ENCODE measurements at regions of chr14 and their contacts with region 1.

Region 1: GRCh38 chr14:23068476-23069412 is 11.4 kb upstream of the CDH24 start:
- DNase-seq: peak; percentile 84
- ATAC-seq: peak; percentile 79
- H3K4me3 Mint-ChIP-seq: peak overlapping the region; percentile 5
- H3K27ac Mint-ChIP-seq: peak overlapping the region; percentile 80
- H3K4me1 Mint-ChIP-seq: peaks cover 37% of the 10 kb centered on the region
- H3K27me3 Mint-ChIP-seq: no peaks in the 10 kb centered on the region

Region 2: GRCh38 chr14:22095860-22096513 is 972.8 kb before region 1 on chr14:
- CTCF ChIA-PET with region 1: no interaction called
- POLR2A ChIA-PET with region 1: no interaction called
- intact Hi-C with region 1: no loop called
- DNase-seq: no peak
- ATAC-seq: peak; percentile 20
- H3K4me3 Mint-ChIP-seq: peak overlapping the region; percentile 65
- H3K27ac Mint-ChIP-seq: peak overlapping the region; percentile 87
- H3K4me1 Mint-ChIP-seq: peaks cover 45% of the 10 kb centered on the region
- H3K27me3 Mint-ChIP-seq: no peaks in the 10 kb centered on the region

Region 3: GRCh38 chr14:22966783-22967269 is 101.9 kb before region 1 on chr14:
- CTCF ChIA-PET with region 1: interaction called, 26 read pairs
- POLR2A ChIA-PET with region 1: interaction called, 6 read pairs
- intact Hi-C with region 1: no loop called
- DNase-seq: no peak
- ATAC-seq: no peak
- H3K4me3 Mint-ChIP-seq: no peak overlapping the region
- H3K27ac Mint-ChIP-seq: no peak overlapping the region
- H3K4me1 Mint-ChIP-seq: no peaks in the 10 kb centered on the region
- H3K27me3 Mint-ChIP-seq: no peaks in the 10 kb centered on the region

Region 4: GRCh38 chr14:23006544-23007419 is 62.0 kb before region 1 on chr14:
- CTCF ChIA-PET with region 1: interaction called, 20 read pairs
- POLR2A ChIA-PET with region 1: interaction called, 4 read pairs
- intact Hi-C with region 1: no loop called
- DNase-seq: peak; percentile 98
- ATAC-seq: peak; percentile 98
- H3K4me3 Mint-ChIP-seq: peak overlapping the region; percentile 95
- H3K27ac Mint-ChIP-seq: peak overlapping the region; percentile 99
- H3K4me1 Mint-ChIP-seq: peaks cover 45% of the 10 kb centered on the region
- H3K27me3 Mint-ChIP-seq: no peaks in the 10 kb centered on the region

Region 5: GRCh38 chr14:23034483-23035302 is 34.1 kb before region 1 on chr14 and contains the start of gene PSMB5:
- CTCF ChIA-PET with region 1: interaction called, 14 read pairs
- POLR2A ChIA-PET with region 1: no interaction called
- intact Hi-C with region 1: no loop called
- DNase-seq: peak; percentile 94
- ATAC-seq: peak; percentile 95
- H3K4me3 Mint-ChIP-seq: peak within 1 kb of the TSS; percentile 97
- H3K27ac Mint-ChIP-seq: peak within 1 kb of the TSS; percentile 97
- H3K4me1 Mint-ChIP-seq: peaks cover 36% of the 10 kb centered on the region
- H3K27me3 Mint-ChIP-seq: no peaks in the 10 kb centered on the region
- total RNA-seq, gene PSMB5: 104 to 129 TPM

Region 6: GRCh38 chr14:23113431-23114119 is 44.8 kb after region 1 on chr14:
- CTCF ChIA-PET with region 1: interaction called, 35 read pairs
- POLR2A ChIA-PET with region 1: no interaction called
- intact Hi-C with region 1: loop called (anchors 1 kb)
- DNase-seq: no peak
- ATAC-seq: no peak
- H3K4me3 Mint-ChIP-seq: no peak overlapping the region
- H3K27ac Mint-ChIP-seq: no peak overlapping the region
- H3K4me1 Mint-ChIP-seq: peaks cover 27% of the 10 kb centered on the region
- H3K27me3 Mint-ChIP-seq: no peaks in the 10 kb centered on the region

Region 7: DNA sequence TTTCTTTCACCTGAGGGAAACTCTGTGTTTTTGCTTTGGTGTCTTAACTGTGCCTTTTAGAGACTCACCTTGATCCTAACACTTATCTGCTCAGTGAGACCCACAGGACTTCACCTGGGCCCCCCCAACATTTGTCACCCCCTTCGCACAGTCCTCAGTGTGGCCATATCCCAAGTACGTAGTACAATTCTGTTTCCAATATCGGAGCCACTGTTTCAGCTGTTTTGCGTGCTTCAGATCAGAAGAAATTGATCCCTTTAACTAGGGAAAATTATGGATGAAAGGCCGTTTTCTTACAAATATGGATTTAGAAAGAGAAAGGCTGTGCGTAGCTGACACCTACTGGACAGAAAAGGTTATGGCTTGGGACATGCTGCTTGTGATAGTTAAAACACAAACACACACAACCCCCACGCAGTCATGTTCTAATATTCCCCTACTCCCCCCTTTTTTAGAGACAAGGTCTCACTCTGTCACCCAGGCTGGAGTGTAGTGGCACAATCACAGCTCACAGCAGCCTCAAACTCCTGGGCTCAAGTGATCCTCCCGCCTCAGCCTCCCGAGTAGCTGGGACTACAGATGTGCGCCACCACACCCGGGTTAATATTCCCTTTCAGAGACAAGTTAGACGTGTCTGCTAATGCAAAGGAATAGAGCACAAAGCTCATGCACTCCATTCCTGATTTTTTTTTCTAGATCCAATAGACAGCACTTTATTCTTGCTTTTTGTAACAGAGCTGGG is 118.3 kb after region 1 on chr14:
- CTCF ChIA-PET with region 1: interaction called, 21 read pairs
- POLR2A ChIA-PET with region 1: no interaction called
- intact Hi-C with region 1: loop called (anchors 1 kb)
- DNase-seq: peak; percentile 39
- ATAC-seq: peak; percentile 74
- H3K4me3 Mint-ChIP-seq: no peak overlapping the region
- H3K27ac Mint-ChIP-seq: no peak overlapping the region
- H3K4me1 Mint-ChIP-seq: peaks cover 2% of the 10 kb centered on the region
- H3K27me3 Mint-ChIP-seq: no peaks in the 10 kb centered on the region